Tibial artery (tissue), 4 donors: ENCODE measurements at regions of chr9 and their contacts with region 1.

Region 1: DNA sequence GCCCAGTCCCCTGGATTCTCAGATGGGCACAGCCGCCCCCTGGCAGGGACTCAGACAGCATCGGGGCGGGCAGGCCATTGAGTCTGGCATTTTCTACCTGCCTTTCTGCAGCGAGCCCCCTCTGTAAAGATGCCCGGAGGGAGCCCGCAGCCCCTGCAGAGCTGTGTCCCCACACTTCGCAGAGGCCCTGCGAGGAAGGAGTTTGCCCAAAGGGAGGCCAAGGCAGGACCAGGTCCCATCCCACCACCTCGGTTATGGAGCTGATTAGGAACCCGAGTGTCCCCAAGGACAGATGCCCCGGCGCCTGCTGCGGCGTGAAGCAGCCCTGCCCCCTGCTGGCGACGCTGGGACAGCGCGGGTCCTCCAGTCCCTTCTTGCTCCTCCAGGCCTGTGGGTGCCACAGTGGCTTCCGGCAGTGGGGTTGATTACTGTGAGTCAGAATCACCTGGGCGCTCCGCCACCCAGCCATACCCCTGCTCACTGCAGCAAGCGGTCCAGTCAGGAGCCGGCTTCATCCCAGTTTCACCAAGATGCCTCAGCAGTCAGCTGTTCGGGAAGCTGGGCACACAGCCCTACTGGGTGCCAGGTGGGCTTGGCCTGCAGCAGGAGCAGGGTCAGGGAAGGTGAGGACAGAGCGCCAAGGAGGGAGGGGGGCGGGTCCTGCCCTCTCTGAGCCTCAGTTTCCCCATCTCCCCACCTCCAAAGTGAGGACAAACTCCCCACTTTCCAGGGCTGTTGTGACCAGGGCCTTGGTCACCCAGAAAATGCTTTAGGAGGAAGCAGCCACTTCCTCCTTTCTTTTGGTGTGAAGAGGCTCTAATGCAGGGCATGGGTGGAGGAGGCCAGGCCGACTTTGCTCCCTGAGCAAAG is 117.1 kb downstream of the RXRA start:
- DNase-seq: peak; percentile 76 to 92
- H3K4me3 ChIP-seq: no peak overlapping the region
- H3K27ac ChIP-seq: no peak overlapping the region
- H3K4me1 ChIP-seq: peaks cover 0 to 24% (median 18%) of the 10 kb centered on the region in 4 donors
- H3K27me3 ChIP-seq: peaks cover 0 to 13% of the 10 kb centered on the region in 2 donors
- CTCF ChIP-seq: peak; percentile 99

Region 2: DNA sequence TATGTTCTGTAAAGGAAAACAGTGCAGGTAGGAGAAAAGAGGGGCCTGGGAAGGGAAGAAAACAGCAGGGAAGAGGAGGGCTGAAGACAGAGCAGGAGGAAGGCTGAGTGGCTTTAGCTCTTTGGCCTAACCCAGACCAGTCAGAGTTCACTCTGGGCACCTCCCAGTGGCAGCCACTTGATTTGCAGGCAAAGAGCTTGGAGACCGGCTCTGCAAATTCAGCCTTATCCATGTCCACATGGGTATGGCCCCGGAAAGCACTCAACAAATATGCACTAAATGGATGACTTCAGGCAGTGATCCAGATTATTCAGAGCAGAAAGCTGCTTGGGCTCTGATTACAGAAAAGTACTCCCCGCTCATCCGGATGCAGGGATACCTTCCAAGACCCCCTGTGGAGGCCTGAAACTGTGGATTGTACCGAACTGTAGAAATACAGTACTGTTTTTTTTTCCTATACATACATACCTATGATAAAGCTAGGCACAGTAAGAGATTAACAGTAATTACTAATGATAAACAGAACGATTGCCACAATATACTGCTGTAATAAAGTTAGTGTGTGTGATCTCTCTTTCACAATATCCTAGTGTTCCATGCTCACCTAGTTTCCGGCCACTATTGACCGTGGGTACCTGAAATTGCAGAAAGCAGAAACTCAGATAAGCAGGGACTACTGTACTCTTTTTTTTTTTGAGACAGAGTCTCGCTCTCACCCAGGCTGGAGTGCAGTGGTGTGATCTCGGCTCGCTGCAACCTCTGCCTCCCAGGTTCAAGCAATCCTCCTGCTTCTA is 274.4 kb before region 1 on chr9:
- intact Hi-C with region 1: loop called (anchors 1 kb)
- DNase-seq: no peak
- H3K4me3 ChIP-seq: no peak overlapping the region
- H3K27ac ChIP-seq: no peak overlapping the region
- H3K4me1 ChIP-seq: peaks cover 0 to 13% (median 3%) of the 10 kb centered on the region in 4 donors
- H3K27me3 ChIP-seq: peaks cover 0 to 7% of the 10 kb centered on the region in 2 donors
- CTCF ChIP-seq: no peak